Left cardiac atrium (tissue), 4 donors: ENCODE measurements at regions of chr3 and their contacts with region 1.

Region 1: GRCh38 chr3:3126477-3127431 is at the start of gene TRNT1:
- DNase-seq: peak; percentile 98
- ATAC-seq: peak; percentile 99
- total RNA-seq, gene TRNT1: 15.6 to 16.1 TPM

Region 2: DNA sequence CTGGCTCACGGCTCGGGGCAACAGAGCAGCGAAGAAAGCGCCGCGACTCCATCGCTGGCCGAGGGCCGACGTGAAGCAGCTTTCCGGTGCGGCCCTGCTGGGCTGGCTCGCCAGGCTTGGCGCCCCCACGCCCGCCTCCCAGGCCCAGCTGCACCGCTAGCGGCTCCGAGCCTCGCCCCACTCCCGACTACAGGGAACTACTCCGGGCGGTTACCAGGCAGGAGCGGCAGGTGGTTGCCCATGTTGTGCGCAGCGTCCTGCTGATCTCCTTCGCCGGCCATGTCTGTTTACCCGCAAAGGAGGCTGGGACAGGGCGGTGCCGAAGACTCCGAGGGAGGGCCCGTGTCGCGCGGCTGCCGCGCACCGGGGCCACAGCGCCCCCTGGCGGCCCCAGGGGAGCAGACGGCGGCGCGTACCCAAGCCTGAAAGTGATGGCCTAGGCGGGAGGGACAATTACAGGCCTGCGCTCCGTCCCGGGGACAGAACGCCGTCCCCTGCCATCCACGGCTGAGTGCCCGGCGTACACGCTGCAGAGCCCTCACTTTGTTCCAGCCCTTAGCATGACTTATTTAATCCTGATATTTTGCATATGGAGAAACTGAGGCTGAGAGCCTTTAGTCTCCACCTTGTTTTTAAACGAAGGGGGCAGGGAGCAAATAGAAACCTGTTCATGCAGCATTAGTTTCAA is 52.8 kb after region 1 on chr3 and contains the start of gene CRBN:
- intact Hi-C with region 1: loop called in 1 of 2 experiments (anchors 10 kb)
- DNase-seq: peak; percentile 89
- ATAC-seq: peak; percentile 99
- total RNA-seq, gene CRBN: 32.1 to 42.4 TPM

Region 3: DNA sequence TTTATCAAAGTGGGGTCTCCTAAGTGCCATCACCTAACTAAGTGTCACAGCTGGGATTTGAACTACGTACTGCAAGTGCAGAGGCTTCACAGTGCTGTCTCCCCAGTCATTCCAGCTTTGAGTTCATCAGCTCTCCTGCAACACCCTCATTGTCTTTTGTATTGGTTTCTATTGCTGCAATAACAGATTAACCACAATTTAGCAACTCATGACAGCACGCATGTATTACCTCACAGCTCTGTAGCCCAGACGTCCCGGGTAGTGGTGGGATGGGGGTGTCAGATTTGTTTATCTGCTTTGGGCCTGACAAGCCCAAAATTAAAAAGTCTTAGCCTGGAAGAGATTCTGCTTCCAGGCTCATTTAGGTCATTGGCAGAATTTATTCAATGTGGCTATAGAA is 452.0 kb after region 1 on chr3:
- intact Hi-C with region 1: no loop called
- DNase-seq: no peak
- ATAC-seq: no peak